Panc1 (cell line): ENCODE measurements at regions of chr9 and their contacts with region 1.

Region 1: DNA sequence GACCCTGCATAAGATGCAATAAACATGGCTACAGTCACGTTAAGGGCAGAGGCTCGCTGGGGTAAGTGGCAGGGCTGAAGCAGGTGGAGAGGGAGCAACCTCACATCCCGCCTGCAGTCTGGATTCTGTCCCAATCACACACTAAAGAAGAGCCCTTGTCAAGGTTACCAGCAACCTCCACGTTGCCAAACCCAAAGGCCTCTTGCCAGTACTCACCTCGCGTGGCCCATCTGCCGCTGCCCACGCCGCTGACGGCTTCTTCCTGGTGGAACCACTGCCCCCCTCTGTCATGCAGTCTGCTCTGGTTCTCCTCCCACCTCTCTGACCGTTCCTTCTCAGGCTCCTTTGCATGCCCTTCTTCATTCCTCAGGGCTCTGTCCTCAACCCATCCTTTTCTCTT is 8.8 kb downstream of the AQP7 start:
- DNase-seq: no peak
- ATAC-seq: no peak
- H3K4me3 ChIP-seq: no peak overlapping the region
- H3K27ac ChIP-seq: no peak overlapping the region
- H3K4me1 ChIP-seq: peaks cover 7% of the 10 kb centered on the region
- H3K27me3 ChIP-seq: no peaks in the 10 kb centered on the region
- CTCF ChIP-seq: no peak

Region 2: GRCh38 chr9:33029106-33029788 is 364.3 kb before region 1 on chr9:
- CTCF ChIA-PET with region 1: no interaction called
- POLR2A ChIA-PET with region 1: no interaction called
- in situ Hi-C with region 1: no loop called
- intact Hi-C with region 1: no loop called
- DNase-seq: no peak
- ATAC-seq: no peak
- H3K4me3 ChIP-seq: no peak overlapping the region
- H3K27ac ChIP-seq: peak overlapping the region; percentile 48
- H3K4me1 ChIP-seq: peaks cover 41% of the 10 kb centered on the region
- H3K27me3 ChIP-seq: no peaks in the 10 kb centered on the region
- CTCF ChIP-seq: no peak

Region 3: GRCh38 chr9:33354651-33355211 is 38.9 kb before region 1 on chr9:
- CTCF ChIA-PET with region 1: no interaction called
- POLR2A ChIA-PET with region 1: no interaction called
- in situ Hi-C with region 1: no loop called
- intact Hi-C with region 1: no loop called
- DNase-seq: no peak
- ATAC-seq: no peak
- H3K4me3 ChIP-seq: no peak overlapping the region
- H3K27ac ChIP-seq: no peak overlapping the region
- H3K4me1 ChIP-seq: no peaks in the 10 kb centered on the region
- H3K27me3 ChIP-seq: no peaks in the 10 kb centered on the region
- CTCF ChIP-seq: no peak

Region 4: GRCh38 chr9:33415501-33416038 is 22.0 kb after region 1 on chr9:
- CTCF ChIA-PET with region 1: no interaction called
- POLR2A ChIA-PET with region 1: interaction called, 12 read pairs
- in situ Hi-C with region 1: no loop called
- intact Hi-C with region 1: no loop called
- DNase-seq: peak; percentile 67
- ATAC-seq: peak; percentile 88
- H3K4me3 ChIP-seq: no peak overlapping the region
- H3K27ac ChIP-seq: peak overlapping the region; percentile 24; the same call in 1 of the 2 replicates
- H3K4me1 ChIP-seq: peaks cover 27% of the 10 kb centered on the region
- H3K27me3 ChIP-seq: no peaks in the 10 kb centered on the region
- CTCF ChIP-seq: no peak